ENCODE measurements at regions of chr1 and their contacts with region 1.

Region 1: DNA sequence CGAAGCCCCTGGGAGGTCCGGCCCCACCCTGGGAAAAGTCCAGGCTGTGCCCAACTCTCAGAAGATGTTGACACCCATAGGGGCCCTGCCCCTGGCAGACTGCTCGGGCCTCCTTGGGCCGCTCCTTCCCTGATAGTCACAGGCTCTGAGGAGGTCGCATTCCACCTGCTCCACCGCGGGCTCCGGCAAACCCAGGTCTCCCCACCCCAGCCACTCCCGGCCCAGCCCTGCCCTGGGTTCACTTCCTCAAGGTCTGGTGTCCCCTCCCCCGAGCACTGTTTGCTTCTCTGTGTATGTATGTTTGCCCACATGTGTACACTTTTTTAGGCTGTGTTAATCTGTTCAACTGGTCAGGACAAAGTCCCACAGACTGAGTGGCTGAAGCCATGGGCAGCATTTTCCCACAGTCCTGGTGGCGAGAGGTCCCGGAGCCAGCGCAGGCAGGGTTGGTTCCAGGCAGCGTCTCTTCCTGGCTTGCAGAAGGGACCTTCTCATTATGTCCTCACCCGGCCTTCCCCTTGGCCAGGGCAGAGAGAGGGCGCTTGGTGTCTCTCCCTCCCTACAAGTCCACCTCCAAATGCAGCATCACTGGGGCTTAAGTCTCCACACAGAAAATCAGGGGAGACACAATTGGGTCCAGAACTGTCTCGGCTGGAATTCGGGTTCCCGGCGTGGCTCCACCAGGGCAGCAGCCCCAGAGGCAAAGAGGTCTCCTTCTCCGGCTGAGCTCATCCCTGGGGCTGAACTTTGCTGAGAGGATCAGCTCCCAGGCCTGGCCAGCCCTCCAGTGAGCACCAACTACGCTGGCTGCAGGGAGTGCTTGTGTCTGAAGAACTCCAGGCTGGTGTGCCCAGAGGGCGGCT is 10.5 kb upstream of the PRXL2B start:
- DNase-seq: no peak
- H3K4me3 Mint-ChIP-seq: no peak overlapping the region
- H3K27ac Mint-ChIP-seq: peak overlapping the region; percentile 92
- H3K4me1 Mint-ChIP-seq: peaks cover 58% of the 10 kb centered on the region
- H3K27me3 Mint-ChIP-seq: peaks cover 3% of the 10 kb centered on the region

Region 2: GRCh38 chr1:2556277-2556677 is 19.8 kb before region 1 on chr1 and contains the start of gene TNFRSF14:
- CTCF ChIA-PET with region 1: interaction called, 15 read pairs
- POLR2A ChIA-PET with region 1: interaction called, 94 read pairs
- DNase-seq: peak; percentile 85
- H3K4me3 Mint-ChIP-seq: peak within 1 kb of the TSS; percentile 95
- H3K27ac Mint-ChIP-seq: peak within 1 kb of the TSS; percentile 95
- H3K4me1 Mint-ChIP-seq: peaks cover 44% of the 10 kb centered on the region
- H3K27me3 Mint-ChIP-seq: no peaks in the 10 kb centered on the region
- total RNA-seq, gene TNFRSF14: 171 to 173 TPM

Region 3: DNA sequence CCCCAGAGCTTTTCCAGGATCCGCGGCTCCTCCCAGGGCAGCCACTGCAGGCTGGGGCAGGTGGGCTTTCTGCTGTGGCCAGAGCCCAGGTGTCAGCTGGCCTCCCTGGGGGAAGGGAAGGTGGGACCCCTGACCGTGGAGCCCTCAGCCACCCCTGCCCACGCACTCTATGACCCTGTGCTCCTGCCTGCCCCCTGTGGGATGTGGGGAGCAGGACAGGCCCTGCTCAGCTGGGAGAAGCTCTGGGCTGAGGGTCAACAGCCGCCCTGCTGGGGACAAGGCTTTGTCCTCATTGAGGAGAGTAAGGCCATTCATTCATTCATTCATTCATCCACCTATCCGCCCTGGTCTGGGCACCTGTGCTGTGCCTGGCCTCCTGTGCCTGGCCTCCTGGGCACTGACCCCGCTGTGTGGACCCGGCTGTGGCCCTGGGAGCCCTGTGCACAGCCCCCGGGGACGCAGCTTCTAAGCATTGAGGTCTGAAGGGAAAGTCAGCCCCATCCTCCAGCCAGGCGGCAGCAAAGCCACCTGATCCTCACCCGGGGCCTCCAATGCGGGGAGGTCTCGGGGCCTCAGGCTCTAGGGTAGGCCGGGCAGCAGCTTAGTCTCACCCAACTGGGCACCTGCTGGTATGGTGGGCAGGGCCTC is 14.0 kb before region 1 on chr1:
- CTCF ChIA-PET with region 1: interaction called, 15 read pairs
- POLR2A ChIA-PET with region 1: interaction called, 94 read pairs
- DNase-seq: no peak
- H3K4me3 Mint-ChIP-seq: no peak overlapping the region
- H3K27ac Mint-ChIP-seq: no peak overlapping the region
- H3K4me1 Mint-ChIP-seq: peaks cover 19% of the 10 kb centered on the region
- H3K27me3 Mint-ChIP-seq: no peaks in the 10 kb centered on the region

Measured in activated CD4-positive, alpha-beta memory T cell treated with anti-CD3 and anti-CD28 coated beads, Interleukin-2, amount 10 ng/mL, durations not matched to agents 7 days and 5 days (primary cell).